ENCODE measurements at regions of chr12 and their contacts with region 1.

Region 1: GRCh38 chr12:44088647-44089046 is 252.8 kb downstream of the TMEM117 start:
- DNase-seq: no peak
- ATAC-seq: no peak
- H3K4me3 ChIP-seq: no peak overlapping the region
- H3K27ac ChIP-seq: no peak overlapping the region
- H3K4me1 ChIP-seq: no peaks in the 10 kb centered on the region
- H3K27me3 ChIP-seq: no peaks in the 10 kb centered on the region
- CTCF ChIP-seq: no peak
- POLR2A ChIP-seq: no peak
- RAD21 ChIP-seq: no peak

Region 2: GRCh38 chr12:44193281-44193680 is 104.6 kb after region 1 on chr12:
- CTCF ChIA-PET with region 1: interaction called, 11 read pairs
- POLR2A ChIA-PET with region 1: no interaction called
- dilution Hi-C with region 1: no loop called
- in situ Hi-C with region 1: no loop called
- intact Hi-C with region 1: no loop called
- DNase-seq: no peak
- ATAC-seq: no peak
- H3K4me3 ChIP-seq: no peak overlapping the region
- H3K27ac ChIP-seq: no peak overlapping the region
- H3K4me1 ChIP-seq: no peaks in the 10 kb centered on the region
- H3K27me3 ChIP-seq: no peaks in the 10 kb centered on the region
- CTCF ChIP-seq: no peak
- POLR2A ChIP-seq: no peak
- RAD21 ChIP-seq: no peak